ENCODE measurements at regions of chr22 and their contacts with region 1.

Region 1: DNA sequence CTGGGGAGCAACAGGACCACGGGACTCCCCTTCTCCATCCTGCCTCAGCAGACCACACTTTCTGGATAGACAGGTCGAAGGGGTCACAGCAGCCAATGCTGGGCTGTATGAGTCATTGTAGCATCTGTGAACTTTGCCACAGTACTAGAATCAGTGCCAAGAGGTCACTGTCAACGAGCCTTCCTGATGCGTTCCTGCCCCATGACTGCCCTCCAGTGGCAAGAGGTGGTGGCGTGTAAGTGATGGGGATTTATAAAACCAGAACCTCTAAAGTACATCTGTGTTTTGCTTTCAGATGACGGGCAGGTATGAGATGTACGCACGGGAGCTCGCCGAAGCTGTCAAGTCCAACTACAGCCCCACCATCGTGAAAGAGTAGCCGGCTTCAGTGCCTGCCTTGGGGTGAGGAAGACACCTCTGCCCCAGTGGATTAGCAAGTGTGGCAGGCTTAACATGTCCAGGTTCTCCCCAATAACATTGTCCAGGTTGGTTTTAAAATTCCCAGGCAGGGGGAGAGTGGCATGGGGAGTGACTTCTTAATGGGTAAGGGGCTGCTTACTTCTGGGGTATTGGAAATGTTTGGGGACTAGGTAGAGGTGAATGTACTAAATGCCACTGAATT is 29.4 kb downstream of the GUCD1 start:
- DNase-seq: peak; percentile 44
- H3K4me3 ChIP-seq: no peak overlapping the region
- H3K27ac ChIP-seq: no peak overlapping the region
- H3K4me1 ChIP-seq: peaks cover 4% of the 10 kb centered on the region
- H3K27me3 ChIP-seq: no peaks in the 10 kb centered on the region
- CTCF ChIP-seq: peak; percentile 89

Region 2: DNA sequence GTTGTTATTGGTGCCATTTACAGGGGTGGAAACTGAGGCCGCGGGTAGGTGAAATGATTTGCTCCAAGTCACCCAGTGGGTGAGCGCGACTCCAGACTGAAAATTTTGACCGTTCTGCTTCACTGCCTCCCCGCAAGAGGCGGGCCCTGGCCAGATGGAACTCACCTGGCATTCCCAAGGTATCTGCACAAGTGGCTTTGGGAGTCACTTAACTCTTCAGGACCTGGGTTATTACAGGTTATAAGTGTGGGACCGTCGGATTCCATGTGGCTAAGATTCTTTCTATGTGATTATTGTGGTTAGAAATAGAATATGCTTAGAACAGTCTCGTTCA is 513.8 kb before region 1 on chr22:
- CTCF ChIA-PET with region 1: no interaction called
- dilution Hi-C with region 1: no loop called
- in situ Hi-C with region 1: loop called in 1 of 2 experiments (anchors 25 kb)
- intact Hi-C with region 1: no loop called
- DNase-seq: no peak
- H3K4me3 ChIP-seq: peak overlapping the region; percentile 65 to 91 (median 83)
- H3K27ac ChIP-seq: peak overlapping the region; percentile 68
- H3K4me1 ChIP-seq: peaks cover 4% of the 10 kb centered on the region
- H3K27me3 ChIP-seq: no peaks in the 10 kb centered on the region
- CTCF ChIP-seq: no peak

Region 3: DNA sequence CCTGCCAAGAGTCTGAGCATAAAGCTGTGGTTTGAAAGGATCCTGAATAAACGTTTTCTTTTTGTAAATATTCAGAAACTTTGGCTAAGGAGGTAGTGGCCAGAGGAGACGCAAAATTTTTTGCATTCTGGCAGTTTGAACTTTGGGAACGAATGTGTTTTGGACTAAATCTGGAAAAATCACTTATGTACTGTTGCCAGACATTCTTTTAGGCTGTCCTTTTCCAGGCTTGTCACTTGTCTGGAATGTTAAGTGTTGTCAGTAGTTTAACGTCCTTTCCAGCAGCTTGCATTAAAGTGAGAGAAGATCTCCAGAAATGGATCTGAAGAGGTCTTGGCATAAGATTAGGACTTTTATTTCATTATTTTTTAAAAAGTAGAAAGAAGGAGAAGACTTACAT is 236.4 kb before region 1 on chr22:
- CTCF ChIA-PET with region 1: interaction called, 12 read pairs
- dilution Hi-C with region 1: no loop called
- in situ Hi-C with region 1: no loop called
- intact Hi-C with region 1: no loop called
- DNase-seq: no peak
- H3K4me3 ChIP-seq: no peak overlapping the region
- H3K27ac ChIP-seq: peak overlapping the region; percentile 2
- H3K4me1 ChIP-seq: peaks cover 26% of the 10 kb centered on the region
- H3K27me3 ChIP-seq: no peaks in the 10 kb centered on the region
- CTCF ChIP-seq: no peak

Region 4: DNA sequence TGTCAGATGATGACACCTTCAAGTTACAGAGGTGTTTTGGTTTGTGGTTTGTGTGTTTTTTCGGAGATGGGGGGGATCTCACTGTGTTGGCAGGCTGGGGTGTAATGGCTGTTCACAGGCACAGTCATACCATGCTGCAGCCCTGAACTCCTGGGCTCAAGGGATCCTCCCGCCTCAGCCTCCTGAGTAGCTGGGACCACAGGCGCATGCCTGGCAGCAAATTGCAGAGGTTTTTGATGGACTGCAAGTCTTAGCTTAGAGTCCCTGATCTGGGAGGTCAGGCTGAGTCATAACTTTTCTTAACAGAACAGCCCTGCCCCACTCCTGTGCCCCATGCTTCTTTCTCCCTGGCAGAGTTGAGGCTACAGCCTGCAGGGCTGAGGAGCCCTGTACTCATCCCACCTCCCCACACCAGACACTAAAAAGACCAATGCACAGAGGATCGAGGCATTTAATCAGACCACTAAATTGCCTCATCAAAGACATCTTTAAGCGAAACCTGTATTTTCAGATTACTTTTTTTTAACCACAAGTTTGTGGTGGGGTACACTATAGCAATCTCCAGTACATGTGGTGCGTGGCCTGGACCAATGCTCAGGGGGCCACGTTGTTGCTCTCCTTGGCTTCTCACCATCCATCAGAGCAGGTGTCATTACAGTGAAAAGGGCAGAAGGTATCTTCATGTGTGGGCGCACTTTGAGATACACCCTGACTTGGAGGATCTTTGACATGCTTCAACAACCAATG is 115.2 kb before region 1 on chr22:
- CTCF ChIA-PET with region 1: interaction called, 3 read pairs
- dilution Hi-C with region 1: no loop called
- in situ Hi-C with region 1: loop called in 1 of 2 experiments (anchors 10 kb)
- intact Hi-C with region 1: no loop called
- DNase-seq: no peak
- H3K4me3 ChIP-seq: no peak overlapping the region
- H3K27ac ChIP-seq: no peak overlapping the region
- H3K4me1 ChIP-seq: peaks cover 17% of the 10 kb centered on the region
- H3K27me3 ChIP-seq: no peaks in the 10 kb centered on the region
- CTCF ChIP-seq: no peak

Region 5: GRCh38 chr22:24486501-24486921 is 39.0 kb before region 1 on chr22:
- CTCF ChIA-PET with region 1: no interaction called
- dilution Hi-C with region 1: no loop called
- in situ Hi-C with region 1: no loop called
- intact Hi-C with region 1: no loop called
- DNase-seq: peak; percentile 95
- H3K4me3 ChIP-seq: no peak overlapping the region
- H3K27ac ChIP-seq: no peak overlapping the region
- H3K4me1 ChIP-seq: peaks cover 51% of the 10 kb centered on the region
- H3K27me3 ChIP-seq: no peaks in the 10 kb centered on the region
- CTCF ChIP-seq: no peak

Region 6: DNA sequence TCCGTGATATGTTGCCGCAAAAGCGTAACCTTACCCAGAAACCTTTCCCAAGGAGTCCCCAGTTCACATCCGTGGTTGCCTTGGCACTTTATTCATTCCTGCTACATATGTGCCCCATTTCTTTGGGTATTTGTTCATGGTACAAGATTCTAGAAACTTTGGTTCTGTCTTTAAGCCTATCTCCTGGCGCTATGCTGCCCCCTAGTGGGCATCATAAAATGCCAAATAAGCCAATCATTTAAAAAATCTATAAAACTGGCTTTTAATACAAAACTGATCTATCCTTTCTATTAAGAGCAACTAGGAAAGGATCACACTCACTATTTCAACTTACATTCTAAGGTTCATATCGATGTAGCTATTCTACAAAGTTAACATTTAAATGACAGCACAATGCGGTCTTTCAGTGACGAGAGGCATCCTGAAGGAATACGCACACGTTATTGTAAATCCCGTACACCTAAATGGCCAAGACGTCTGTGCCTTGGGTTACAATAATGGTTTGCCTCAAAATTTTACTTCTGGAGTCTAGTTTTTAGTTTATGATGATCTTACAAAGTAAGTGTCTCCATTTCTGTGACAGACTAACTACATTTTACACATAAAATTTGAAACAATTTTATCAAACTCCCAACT is 232.8 kb after region 1 on chr22:
- CTCF ChIA-PET with region 1: no interaction called
- dilution Hi-C with region 1: no loop called
- in situ Hi-C with region 1: no loop called
- intact Hi-C with region 1: loop called (anchors 5 kb)
- DNase-seq: peak; percentile 23
- H3K4me3 ChIP-seq: no peak overlapping the region
- H3K27ac ChIP-seq: no peak overlapping the region
- H3K4me1 ChIP-seq: no peaks in the 10 kb centered on the region
- H3K27me3 ChIP-seq: peaks cover 4% of the 10 kb centered on the region
- CTCF ChIP-seq: peak; percentile 71 to 77

Region 7: GRCh38 chr22:24768537-24769374 is 243.2 kb after region 1 on chr22:
- CTCF ChIA-PET with region 1: no interaction called
- dilution Hi-C with region 1: no loop called
- in situ Hi-C with region 1: no loop called
- intact Hi-C with region 1: no loop called
- DNase-seq: peak; percentile 29
- H3K4me3 ChIP-seq: no peak overlapping the region
- H3K27ac ChIP-seq: no peak overlapping the region
- H3K4me1 ChIP-seq: no peaks in the 10 kb centered on the region
- H3K27me3 ChIP-seq: no peaks in the 10 kb centered on the region
- CTCF ChIP-seq: peak; percentile 83 to 93

Region 8: DNA sequence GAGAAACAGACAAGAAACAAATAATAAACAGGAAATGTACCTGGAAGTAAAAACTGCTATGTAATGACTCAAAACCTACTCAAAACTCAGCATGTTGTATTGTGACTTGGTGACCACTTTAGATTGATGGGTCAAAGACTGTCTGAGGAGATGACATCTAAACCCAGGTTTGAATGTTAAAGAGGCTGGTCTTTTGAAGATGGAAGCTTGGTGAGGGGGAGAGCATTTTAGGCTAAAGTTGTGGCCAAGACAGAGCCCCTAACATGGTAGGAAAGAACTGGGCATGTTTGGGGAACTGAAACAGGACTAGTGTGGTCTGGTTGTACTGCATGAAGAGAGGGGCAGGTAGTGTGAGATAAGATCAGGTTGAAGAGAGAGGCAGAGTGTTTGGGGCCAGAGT is 1131.2 kb after region 1 on chr22:
- CTCF ChIA-PET with region 1: no interaction called
- dilution Hi-C with region 1: no loop called
- in situ Hi-C with region 1: no loop called
- intact Hi-C with region 1: no loop called
- DNase-seq: no peak
- H3K4me3 ChIP-seq: no peak overlapping the region
- H3K27ac ChIP-seq: no peak overlapping the region
- H3K4me1 ChIP-seq: no peaks in the 10 kb centered on the region
- H3K27me3 ChIP-seq: no peaks in the 10 kb centered on the region
- CTCF ChIP-seq: no peak